ENCODE measurements at regions of chrX and their contacts with region 1.

Region 1: GRCh38 chrX:125628435-125628834 is 308.8 kb downstream of the TEX13C start:
- DNase-seq: no peak
- H3K4me3 ChIP-seq: no peak overlapping the region
- H3K27ac ChIP-seq: no peak overlapping the region
- H3K4me1 ChIP-seq: no peaks in the 10 kb centered on the region
- H3K27me3 ChIP-seq: no peaks in the 10 kb centered on the region
- CTCF ChIP-seq: no peak
- EP300 ChIP-seq: no peak
- POLR2A ChIP-seq: no peak

Region 2: DNA sequence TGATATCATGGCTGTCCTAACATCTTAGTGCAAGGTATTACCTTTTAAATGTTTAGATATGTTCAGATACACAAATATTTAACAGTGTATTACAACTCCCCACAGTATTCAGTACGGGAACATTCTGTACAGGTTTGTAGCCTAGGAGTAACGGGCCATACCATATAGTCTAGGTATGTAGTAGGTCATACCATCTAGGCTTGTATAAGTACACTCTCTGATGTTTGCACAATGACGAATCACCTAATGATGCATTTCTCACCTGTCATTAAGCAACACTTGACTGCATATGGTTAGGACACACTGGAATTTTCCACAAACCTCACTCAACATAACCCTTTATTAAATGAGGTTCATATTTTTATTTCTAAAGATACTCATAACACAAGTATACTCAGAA is 1963.2 kb before region 1 on chrX:
- intact Hi-C with region 1: no loop called
- DNase-seq: no peak
- H3K4me3 ChIP-seq: no peak overlapping the region
- H3K27ac ChIP-seq: no peak overlapping the region
- H3K4me1 ChIP-seq: no peaks in the 10 kb centered on the region
- H3K27me3 ChIP-seq: no peaks in the 10 kb centered on the region
- CTCF ChIP-seq: no peak
- EP300 ChIP-seq: no peak
- POLR2A ChIP-seq: no peak

Region 3: GRCh38 chrX:125520029-125520428 is 108.4 kb before region 1 on chrX:
- intact Hi-C with region 1: loop called in 1 of 4 experiments (anchors 5 kb)
- DNase-seq: no peak
- H3K4me3 ChIP-seq: no peak overlapping the region
- H3K27ac ChIP-seq: no peak overlapping the region
- H3K4me1 ChIP-seq: no peaks in the 10 kb centered on the region
- H3K27me3 ChIP-seq: no peaks in the 10 kb centered on the region
- CTCF ChIP-seq: no peak
- EP300 ChIP-seq: no peak
- POLR2A ChIP-seq: no peak

Region 4: DNA sequence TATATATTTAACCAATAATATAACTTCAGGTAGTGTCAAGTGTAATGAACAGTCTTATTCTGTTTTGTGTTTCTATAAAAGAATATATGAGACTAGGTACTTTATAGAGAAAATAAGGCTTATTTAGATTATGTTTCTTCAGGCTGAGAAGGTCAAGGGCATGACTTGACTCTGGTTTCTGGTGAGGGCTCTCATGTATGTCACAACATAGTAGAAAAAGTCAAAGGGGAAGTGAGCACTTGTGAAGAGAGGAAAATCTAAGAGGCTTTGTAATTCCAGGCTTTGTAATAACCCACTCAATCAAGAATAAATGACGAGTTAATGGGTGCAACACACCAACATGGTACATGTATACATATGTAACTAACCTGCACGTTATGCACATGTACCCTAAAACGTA is 1218.7 kb after region 1 on chrX:
- intact Hi-C with region 1: no loop called
- DNase-seq: no peak
- H3K4me3 ChIP-seq: no peak overlapping the region
- H3K27ac ChIP-seq: no peak overlapping the region
- H3K4me1 ChIP-seq: no peaks in the 10 kb centered on the region
- H3K27me3 ChIP-seq: no peaks in the 10 kb centered on the region
- CTCF ChIP-seq: no peak
- EP300 ChIP-seq: no peak
- POLR2A ChIP-seq: no peak